OCI-LY7 (cell line): ENCODE measurements at regions of chr5 and their contacts with region 1.

Region 1: GRCh38 chr5:149731639-149732323 is 1.7 kb downstream of the PPARGC1B start:
- DNase-seq: peak; percentile 89
- H3K4me3 ChIP-seq: peak overlapping the region; percentile 90
- H3K27ac ChIP-seq: peak overlapping the region; percentile 66
- H3K4me1 ChIP-seq: peaks cover 11% of the 10 kb centered on the region
- CTCF ChIP-seq: no peak

Region 2: GRCh38 chr5:149646564-149646963 is 85.2 kb before region 1 on chr5:
- CTCF ChIA-PET with region 1: interaction called, 3 read pairs
- POLR2A ChIA-PET with region 1: no interaction called
- intact Hi-C with region 1: loop called (anchors 5 kb)
- DNase-seq: peak; percentile 83
- H3K4me3 ChIP-seq: peak overlapping the region; percentile 10
- H3K27ac ChIP-seq: peak overlapping the region; percentile 79
- H3K4me1 ChIP-seq: peaks cover 56% of the 10 kb centered on the region
- CTCF ChIP-seq: no peak

Region 3: DNA sequence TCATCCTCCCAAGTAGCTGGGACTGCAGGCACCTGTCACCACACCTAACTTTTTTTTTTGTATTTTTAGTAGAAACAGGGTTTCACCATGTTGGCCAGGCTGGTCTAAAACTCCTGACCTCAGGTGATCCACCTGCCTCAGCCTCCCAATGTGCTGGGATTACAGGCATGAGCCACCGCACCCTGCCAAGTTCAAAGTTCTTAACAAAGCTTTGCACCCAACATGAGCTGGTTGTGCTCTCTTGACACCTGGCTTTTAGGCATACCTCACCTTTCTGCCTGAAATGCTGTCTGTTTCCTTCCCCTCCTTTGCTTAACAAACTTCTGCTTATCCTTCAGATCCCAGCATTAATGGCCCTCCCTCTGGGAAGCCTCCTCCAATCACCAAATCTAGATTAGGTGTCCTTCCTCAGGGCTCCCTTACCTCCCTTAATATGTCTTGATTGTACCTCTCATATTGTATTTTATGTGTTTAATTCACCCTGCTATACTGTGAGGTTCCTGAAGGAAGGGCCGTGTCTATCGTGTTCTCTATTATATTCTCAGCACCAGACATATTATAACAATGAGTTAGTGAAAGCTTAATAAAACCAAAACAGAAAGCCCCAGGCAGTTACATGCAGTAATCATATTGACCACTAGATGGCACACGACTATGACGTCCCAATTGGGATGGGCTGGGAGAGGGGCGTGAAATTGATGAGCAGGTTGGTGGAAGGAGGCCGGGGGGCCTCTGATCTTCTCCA is 64.5 kb before region 1 on chr5:
- CTCF ChIA-PET with region 1: interaction called, 3 read pairs
- POLR2A ChIA-PET with region 1: interaction called, 3 read pairs
- intact Hi-C with region 1: loop called (anchors 5 kb)
- DNase-seq: peak; percentile 60
- H3K4me3 ChIP-seq: no peak overlapping the region
- H3K27ac ChIP-seq: no peak overlapping the region
- H3K4me1 ChIP-seq: no peaks in the 10 kb centered on the region
- CTCF ChIP-seq: peak; percentile 99

Region 4: GRCh38 chr5:149680810-149681221 is 51.0 kb before region 1 on chr5:
- CTCF ChIA-PET with region 1: interaction called, 6 read pairs
- POLR2A ChIA-PET with region 1: no interaction called
- intact Hi-C with region 1: loop called (anchors 2 kb)
- DNase-seq: peak; percentile 84
- H3K4me3 ChIP-seq: no peak overlapping the region
- H3K27ac ChIP-seq: peak overlapping the region; percentile 41
- H3K4me1 ChIP-seq: peaks cover 19% of the 10 kb centered on the region
- CTCF ChIP-seq: no peak

Region 5: DNA sequence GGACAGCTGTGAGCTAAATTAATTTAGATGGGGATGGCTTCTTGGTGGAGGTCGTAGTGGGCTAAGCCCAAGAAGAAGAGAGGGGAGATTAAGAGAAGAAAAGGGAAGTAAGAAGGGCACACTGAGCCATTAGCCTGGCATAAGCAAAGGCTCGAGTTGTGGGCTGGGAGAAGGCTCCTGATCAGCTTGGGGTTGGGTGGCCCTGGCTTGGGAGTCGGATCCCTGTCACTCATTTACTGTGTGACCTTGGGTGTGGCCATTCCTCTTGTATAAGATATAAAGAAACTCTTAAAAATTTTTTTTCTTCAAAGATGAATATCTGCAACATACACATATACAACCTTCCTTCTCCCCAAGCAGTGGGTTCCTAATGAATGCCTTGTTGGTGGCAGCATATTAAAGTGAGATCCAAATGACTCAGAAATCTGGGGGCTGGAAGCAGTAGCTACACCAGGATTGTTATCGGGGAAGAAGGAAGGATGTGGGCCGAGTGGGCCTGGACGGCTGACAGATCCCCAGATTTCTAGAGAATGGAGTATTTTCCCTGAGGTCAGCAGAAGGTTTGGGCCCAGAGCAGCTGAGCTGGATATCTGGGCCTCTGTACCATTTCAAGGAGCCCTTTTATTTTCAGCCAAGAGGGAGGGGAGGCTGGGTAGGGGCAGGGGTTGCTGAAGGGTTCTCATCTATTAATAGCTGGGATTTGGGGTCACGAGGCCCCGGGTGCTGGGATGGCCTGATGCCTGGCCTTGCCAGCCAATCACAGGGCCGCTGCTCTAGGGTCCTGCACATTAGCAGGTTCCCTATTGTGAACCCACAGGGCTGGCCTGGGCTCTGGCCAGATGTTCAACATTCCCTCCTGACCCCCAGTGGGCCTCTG is 50.5 kb after region 1 on chr5:
- CTCF ChIA-PET with region 1: interaction called, 3 read pairs
- POLR2A ChIA-PET with region 1: interaction called, 3 read pairs
- intact Hi-C with region 1: loop called (anchors 5 kb)
- DNase-seq: no peak
- H3K4me3 ChIP-seq: no peak overlapping the region
- H3K27ac ChIP-seq: peak overlapping the region; percentile 8
- H3K4me1 ChIP-seq: peaks cover 46% of the 10 kb centered on the region
- CTCF ChIP-seq: no peak

Region 6: GRCh38 chr5:149828161-149828884 is 96.5 kb after region 1 on chr5:
- CTCF ChIA-PET with region 1: no interaction called
- POLR2A ChIA-PET with region 1: interaction called, 3 read pairs
- intact Hi-C with region 1: loop called (anchors 2 kb)
- DNase-seq: peak; percentile 87
- H3K4me3 ChIP-seq: no peak overlapping the region
- H3K27ac ChIP-seq: no peak overlapping the region
- H3K4me1 ChIP-seq: peaks cover 3% of the 10 kb centered on the region
- CTCF ChIP-seq: peak; percentile 91

Region 7: DNA sequence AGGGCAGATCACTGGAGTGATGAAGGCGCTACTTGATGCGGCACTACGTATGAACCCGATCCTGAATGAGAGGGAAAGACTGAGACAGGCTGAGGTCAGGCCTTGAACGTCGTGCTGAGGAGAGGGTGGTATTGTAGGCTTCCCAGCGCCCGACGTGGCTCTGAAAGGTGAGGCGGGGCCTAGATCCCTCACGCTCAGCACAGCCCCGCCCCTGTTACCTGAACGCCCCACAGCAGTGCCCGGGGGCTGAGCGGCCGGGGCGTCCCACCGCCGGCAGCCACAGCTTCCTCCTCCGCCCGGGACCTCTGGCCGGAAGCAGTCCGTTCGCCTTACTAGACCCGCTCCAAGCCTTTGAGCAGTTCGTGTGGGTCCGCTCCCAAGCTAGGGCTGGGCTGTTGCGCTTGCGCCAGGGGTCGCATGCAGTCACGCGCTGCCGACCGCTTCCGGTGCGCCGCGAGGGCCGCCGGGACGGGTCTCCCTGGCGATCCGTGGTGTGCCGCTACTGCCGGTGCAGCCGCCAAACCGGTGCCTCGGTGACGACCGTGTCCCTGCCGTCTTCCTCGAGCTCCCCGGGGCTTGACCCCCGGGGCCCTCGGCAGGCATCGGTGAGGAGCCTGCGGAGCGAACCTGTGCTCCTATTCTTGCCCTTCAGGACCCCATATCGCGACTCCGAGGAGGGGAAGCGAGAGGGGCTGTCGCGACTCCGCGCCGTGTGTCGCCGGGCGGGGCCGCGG is 268.6 kb after region 1 on chr5 and contains the starts of genes HMGXB3 and TIGD6:
- CTCF ChIA-PET with region 1: no interaction called
- POLR2A ChIA-PET with region 1: no interaction called
- intact Hi-C with region 1: loop called (anchors 2 kb)
- DNase-seq: peak; percentile 96
- H3K4me3 ChIP-seq: peak within 1 kb of the TSS; percentile 83
- H3K27ac ChIP-seq: peak within 1 kb of the TSS; percentile 66
- H3K4me1 ChIP-seq: peaks cover 27% of the 10 kb centered on the region
- CTCF ChIP-seq: no peak
- total RNA-seq, gene HMGXB3: 35.1 and 40.4 TPM in 2 replicates
- total RNA-seq, gene TIGD6: 3.4 and 5.4 TPM in 2 replicates